Left cardiac atrium (tissue), 4 donors: ENCODE measurements at regions of chr3 and their contacts with region 1.

Region 1: GRCh38 chr3:9422712-9423424 is 25.5 kb downstream of the SETD5 start:
- DNase-seq: peak; percentile 80
- ATAC-seq: peak; percentile 97

Region 2: GRCh38 chr3:9352917-9353752 is 69.7 kb before region 1 on chr3:
- intact Hi-C with region 1: loop called in 1 of 2 experiments (anchors 5 kb)
- DNase-seq: peak; percentile 74
- ATAC-seq: peak; percentile 76 to 79

Region 3: DNA sequence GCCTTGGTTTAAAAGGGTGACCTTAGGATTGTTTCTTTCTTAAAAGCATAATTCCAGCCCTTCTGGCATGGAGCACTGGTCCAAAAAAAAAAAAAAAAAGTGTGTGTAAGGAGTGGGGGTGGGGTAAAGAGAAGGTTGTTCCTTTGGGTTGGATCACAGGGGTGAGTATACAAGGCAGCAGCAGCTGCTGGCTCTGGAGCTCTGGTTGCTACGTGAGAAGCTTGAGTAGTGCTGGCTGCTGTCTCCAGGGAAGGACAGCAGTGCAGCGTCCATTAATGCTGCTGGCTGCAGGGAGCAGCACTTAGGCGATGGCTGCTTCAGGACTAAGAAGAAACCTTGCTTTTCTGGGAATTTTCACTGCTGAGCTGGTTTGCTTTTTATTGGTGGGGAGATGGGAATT is 23.1 kb before region 1 on chr3:
- intact Hi-C with region 1: loop called in 1 of 2 experiments (anchors 2 kb)
- DNase-seq: peak; percentile 82
- ATAC-seq: peak; percentile 9